PC-9 (cell line): ENCODE measurements at regions of chr14 and their contacts with region 1.

Region 1: GRCh38 chr14:20613094-20614037 is 22.2 kb upstream of the RNASE12 start:
- DNase-seq: peak; percentile 79 to 94
- H3K4me3 ChIP-seq: peak overlapping the region; percentile 63
- H3K27ac ChIP-seq: peak overlapping the region; percentile 51
- H3K4me1 ChIP-seq: peaks cover 24% of the 10 kb centered on the region
- H3K27me3 ChIP-seq: no peaks in the 10 kb centered on the region
- CTCF ChIP-seq: peak; percentile 85

Region 2: GRCh38 chr14:20327005-20327869 is 286.1 kb before region 1 on chr14:
- CTCF ChIA-PET with region 1: no interaction called
- POLR2A ChIA-PET with region 1: no interaction called
- intact Hi-C with region 1: loop called (anchors 1 kb)
- DNase-seq: no peak
- H3K4me3 ChIP-seq: no peak overlapping the region
- H3K27ac ChIP-seq: no peak overlapping the region
- H3K4me1 ChIP-seq: peaks cover 8% of the 10 kb centered on the region; the same call in 1 of the 2 replicates
- H3K27me3 ChIP-seq: no peaks in the 10 kb centered on the region
- CTCF ChIP-seq: peak; percentile 71

Region 3: GRCh38 chr14:20413045-20413799 is 200.1 kb before region 1 on chr14 and contains the start of gene TEP1:
- CTCF ChIA-PET with region 1: interaction called, 3 read pairs
- POLR2A ChIA-PET with region 1: no interaction called
- intact Hi-C with region 1: loop called (anchors 10 kb)
- DNase-seq: peak; percentile 65 to 83
- H3K4me3 ChIP-seq: peak within 1 kb of the TSS; percentile 74
- H3K27ac ChIP-seq: peak within 1 kb of the TSS; percentile 76
- H3K4me1 ChIP-seq: peaks cover 7% of the 10 kb centered on the region; the same call in 1 of the 2 replicates
- H3K27me3 ChIP-seq: no peaks in the 10 kb centered on the region
- CTCF ChIP-seq: no peak
- total RNA-seq, gene TEP1: 18.4 and 20.4 TPM in 2 replicates

Region 4: DNA sequence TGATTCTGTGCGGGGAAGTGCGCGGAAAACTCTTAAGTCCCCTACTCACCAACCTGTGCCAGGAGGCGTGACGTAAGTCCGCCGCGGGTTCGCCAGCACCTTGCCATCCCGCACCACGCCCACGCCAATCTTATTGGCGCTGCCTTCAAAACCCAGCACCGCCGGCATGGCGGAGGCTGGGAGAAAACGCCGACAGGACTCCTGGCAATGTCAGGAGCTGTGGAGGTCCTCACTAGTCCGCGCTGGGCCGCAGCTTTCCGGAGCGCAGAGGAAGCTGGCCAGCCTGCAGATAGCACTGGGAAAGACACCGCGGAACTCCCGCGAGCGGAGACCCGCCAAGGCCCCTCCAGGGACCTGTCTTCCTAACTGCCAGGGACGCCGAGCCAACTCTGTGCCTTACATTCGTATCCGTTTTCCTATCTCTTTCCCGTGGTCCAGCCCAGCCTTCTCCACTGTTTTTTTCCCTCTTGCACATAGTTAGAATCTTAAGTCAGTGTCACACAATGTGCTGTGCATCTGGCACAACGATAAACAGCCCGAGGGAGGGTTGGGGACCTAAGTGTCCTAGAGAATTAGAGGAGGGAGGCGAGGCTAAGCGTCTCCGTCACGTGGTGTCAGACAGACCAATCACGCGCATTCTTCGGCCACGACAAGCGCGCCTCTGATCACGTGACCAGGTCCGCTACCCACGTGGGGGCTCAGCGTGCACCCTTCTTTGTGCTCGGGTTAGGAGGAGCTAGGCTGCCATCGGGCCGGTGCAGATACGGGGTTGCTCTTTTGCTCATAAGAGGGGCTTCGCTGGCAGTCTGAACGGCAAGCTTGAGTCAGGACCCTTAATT is 158.6 kb before region 1 on chr14 and contains the starts of genes APEX1 and OSGEP:
- CTCF ChIA-PET with region 1: no interaction called
- POLR2A ChIA-PET with region 1: no interaction called
- intact Hi-C with region 1: loop called (anchors 10 kb)
- DNase-seq: peak; percentile 91 to 92
- H3K4me3 ChIP-seq: peak within 1 kb of the TSS; percentile 77
- H3K27ac ChIP-seq: peak within 1 kb of the TSS; percentile 72
- H3K4me1 ChIP-seq: peaks cover 16% of the 10 kb centered on the region
- H3K27me3 ChIP-seq: no peaks in the 10 kb centered on the region
- CTCF ChIP-seq: no peak
- total RNA-seq, gene APEX1: 107 and 113 TPM in 2 replicates
- total RNA-seq, gene OSGEP: 17.2 and 20.6 TPM in 2 replicates

Region 5: DNA sequence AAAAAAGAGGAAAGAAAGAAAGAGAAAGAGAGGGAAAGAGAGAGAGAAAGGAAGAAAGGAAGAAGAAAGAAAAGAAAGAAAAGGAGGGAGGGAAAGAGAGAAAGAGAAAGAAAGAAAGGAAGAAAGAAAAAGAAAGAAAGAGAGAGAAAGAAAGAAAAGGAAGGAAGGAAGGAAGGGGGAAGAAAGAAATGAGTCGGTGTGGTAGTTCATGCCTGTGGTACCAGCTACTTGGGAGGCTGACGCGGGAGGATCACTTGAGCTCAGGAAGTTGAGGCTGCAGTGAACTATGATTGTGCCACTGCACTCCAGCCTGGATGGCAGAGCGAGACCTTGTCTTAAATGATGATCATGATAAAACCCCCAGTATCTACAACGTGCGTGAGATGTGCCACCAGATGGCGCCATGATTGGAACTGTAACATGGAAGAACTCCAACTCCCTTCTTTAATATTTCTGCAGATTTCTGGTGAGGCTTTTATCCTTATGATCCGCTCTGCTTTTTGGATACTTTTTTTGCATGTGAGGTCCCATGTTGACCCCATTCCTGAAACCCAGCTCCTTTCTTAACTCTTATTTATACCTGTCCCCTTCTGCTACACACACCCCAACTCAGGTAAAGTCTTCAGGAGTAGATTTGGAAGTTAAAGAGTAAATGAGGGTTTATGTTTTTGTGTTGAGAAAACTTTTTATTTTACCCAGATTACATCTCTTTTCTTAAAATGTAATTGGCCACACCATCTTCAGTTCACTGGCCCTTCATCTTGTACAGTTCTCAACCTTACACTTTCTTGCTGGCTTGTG is 82.4 kb before region 1 on chr14:
- CTCF ChIA-PET with region 1: no interaction called
- POLR2A ChIA-PET with region 1: no interaction called
- intact Hi-C with region 1: loop called (anchors 10 kb)
- DNase-seq: peak; percentile 38 to 42
- H3K4me3 ChIP-seq: no peak overlapping the region
- H3K27ac ChIP-seq: no peak overlapping the region
- H3K4me1 ChIP-seq: no peaks in the 10 kb centered on the region
- H3K27me3 ChIP-seq: no peaks in the 10 kb centered on the region
- CTCF ChIP-seq: peak; percentile 65

Region 6: DNA sequence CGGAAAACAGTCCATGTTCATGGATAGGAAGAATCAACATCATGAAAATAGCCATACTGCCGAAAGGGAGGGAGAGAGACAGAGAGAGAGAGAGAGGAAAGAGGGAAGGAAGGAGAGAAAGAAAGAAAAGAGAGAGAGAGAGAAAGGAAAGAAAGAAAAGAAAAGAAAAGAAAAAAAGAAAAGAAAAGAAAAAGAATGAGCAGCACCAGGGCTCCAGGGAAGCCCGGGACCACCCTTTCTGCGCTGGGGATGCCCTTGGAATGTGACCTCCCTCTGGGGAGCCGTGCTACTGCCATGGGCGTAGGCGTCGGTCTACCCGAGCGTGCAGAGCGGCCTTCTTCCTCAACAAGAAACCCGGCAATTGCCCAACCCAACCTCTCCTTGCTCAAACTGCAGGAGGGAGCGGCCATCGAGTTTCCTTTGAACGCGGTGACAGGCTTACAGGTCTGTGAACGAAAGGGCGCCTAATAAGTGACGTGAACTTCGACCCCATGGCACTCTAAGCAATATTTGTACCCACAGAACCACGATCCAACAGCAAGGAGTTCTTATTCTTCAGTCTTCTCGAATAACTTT is 11.2 kb after region 1 on chr14:
- CTCF ChIA-PET with region 1: interaction called, 3 read pairs
- POLR2A ChIA-PET with region 1: interaction called, 4 read pairs
- intact Hi-C with region 1: loop called (anchors 1 kb)
- DNase-seq: peak; percentile 34 to 81
- H3K4me3 ChIP-seq: peak overlapping the region; percentile 67
- H3K27ac ChIP-seq: peak overlapping the region; percentile 38; the same call in 1 of the 2 replicates
- H3K4me1 ChIP-seq: no peaks in the 10 kb centered on the region
- H3K27me3 ChIP-seq: no peaks in the 10 kb centered on the region
- CTCF ChIP-seq: no peak

Region 7: DNA sequence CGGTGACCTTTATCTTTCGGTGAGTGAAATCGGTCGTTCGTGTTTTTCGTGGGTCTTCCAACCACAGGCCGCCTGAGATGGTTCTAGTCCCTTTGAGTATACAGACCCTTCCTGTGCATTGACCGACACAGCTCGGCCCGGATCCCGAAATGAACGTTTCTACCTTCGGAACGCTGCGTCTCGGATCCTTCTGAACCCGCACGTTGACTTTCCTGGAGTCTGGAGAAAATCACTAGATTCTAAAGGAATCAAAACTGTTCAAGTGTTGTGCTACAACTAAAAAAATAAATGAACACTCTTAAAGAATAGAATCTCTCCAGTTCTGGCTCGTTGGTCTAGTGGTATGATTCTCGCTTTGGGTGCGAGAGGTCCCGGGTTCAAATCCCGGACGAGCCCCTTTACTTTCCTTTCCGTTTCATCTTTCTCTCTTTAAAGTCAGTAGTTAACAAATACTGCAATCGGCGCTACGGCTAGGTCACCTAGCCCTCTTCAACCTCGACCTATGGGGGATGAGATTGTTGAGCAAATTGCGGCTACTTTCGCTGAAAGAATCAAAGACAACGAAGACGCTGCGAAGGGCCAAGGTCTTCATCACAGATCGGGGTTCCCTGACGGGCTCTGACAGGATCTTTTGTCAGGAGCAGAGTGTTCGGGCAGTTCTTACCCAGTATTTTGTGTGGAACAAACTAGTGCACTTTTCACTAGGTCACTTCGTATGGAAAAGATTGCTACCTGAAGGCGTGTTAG is 19.5 kb after region 1 on chr14:
- CTCF ChIA-PET with region 1: no interaction called
- POLR2A ChIA-PET with region 1: no interaction called
- intact Hi-C with region 1: loop called (anchors 1 kb)
- DNase-seq: peak; percentile 63 to 75
- H3K4me3 ChIP-seq: peak overlapping the region; percentile 81; the same call in 1 of the 2 replicates
- H3K27ac ChIP-seq: no peak overlapping the region
- H3K4me1 ChIP-seq: no peaks in the 10 kb centered on the region
- H3K27me3 ChIP-seq: no peaks in the 10 kb centered on the region
- CTCF ChIP-seq: no peak